ENCODE measurements at regions of chr12 and their contacts with region 1.

Region 1: GRCh38 chr12:85872497-85873091 is 1.5 kb upstream of the NTS start:
- DNase-seq: no peak
- ATAC-seq: no peak
- H3K4me3 ChIP-seq: no peak overlapping the region
- H3K27ac ChIP-seq: no peak overlapping the region
- H3K4me1 ChIP-seq: no peaks in the 10 kb centered on the region
- H3K27me3 ChIP-seq: no peaks in the 10 kb centered on the region

Region 2: DNA sequence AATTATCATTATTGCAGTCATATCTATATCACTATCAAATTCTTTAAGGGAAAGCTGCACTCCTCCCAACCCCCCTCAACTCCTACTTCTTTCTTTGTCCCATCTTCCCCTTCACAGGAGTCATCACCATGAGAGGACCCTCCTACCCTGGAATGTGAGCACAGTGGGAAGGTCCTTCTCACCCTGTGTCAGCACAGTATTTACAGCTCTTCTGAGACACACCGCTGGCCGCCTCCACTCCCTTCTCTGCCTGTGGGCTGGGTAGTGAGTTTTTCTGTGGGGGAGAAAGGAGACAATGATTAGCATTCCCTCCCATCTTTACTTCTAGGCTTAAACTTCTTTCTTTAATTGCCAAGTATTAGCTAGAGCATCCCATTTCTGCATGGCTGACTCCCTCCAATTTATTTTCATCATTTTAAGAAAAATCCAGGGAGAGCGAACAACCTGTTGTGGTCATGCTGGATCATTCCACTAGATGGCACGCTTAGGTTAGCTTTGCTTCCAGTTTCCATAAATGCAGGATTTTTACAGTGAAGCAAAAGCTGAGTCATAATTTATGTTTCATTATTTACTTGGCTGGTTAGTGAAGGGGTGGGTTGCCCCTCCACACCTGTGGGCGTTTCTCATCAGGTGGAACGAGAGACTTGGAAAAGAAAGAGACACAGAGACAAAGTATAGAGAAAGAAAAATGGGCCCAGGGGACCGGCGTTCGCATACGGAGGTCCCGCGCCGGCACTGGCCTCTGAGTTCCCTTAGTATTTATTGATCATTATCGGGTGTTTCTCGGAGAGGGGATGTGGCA is 404.0 kb before region 1 on chr12:
- intact Hi-C with region 1: loop called (anchors 5 kb)
- DNase-seq: no peak
- ATAC-seq: peak; percentile 76
- H3K4me3 ChIP-seq: peak overlapping the region; percentile 10 to 41
- H3K27ac ChIP-seq: no peak overlapping the region
- H3K4me1 ChIP-seq: no peaks in the 10 kb centered on the region
- H3K27me3 ChIP-seq: no peaks in the 10 kb centered on the region

Region 3: GRCh38 chr12:85476756-85477155 is 395.8 kb before region 1 on chr12:
- intact Hi-C with region 1: loop called (anchors 5 kb)
- DNase-seq: no peak
- ATAC-seq: no peak
- H3K4me3 ChIP-seq: no peak overlapping the region
- H3K27ac ChIP-seq: no peak overlapping the region
- H3K4me1 ChIP-seq: no peaks in the 10 kb centered on the region
- H3K27me3 ChIP-seq: no peaks in the 10 kb centered on the region

Region 4: GRCh38 chr12:85575120-85576096 is 297.2 kb before region 1 on chr12:
- intact Hi-C with region 1: loop called (anchors 2 kb)
- DNase-seq: peak in 1 of 2 donors; percentile 39
- ATAC-seq: peak; percentile 74
- H3K4me3 ChIP-seq: no peak overlapping the region
- H3K27ac ChIP-seq: no peak overlapping the region
- H3K4me1 ChIP-seq: no peaks in the 10 kb centered on the region
- H3K27me3 ChIP-seq: no peaks in the 10 kb centered on the region

Region 5: DNA sequence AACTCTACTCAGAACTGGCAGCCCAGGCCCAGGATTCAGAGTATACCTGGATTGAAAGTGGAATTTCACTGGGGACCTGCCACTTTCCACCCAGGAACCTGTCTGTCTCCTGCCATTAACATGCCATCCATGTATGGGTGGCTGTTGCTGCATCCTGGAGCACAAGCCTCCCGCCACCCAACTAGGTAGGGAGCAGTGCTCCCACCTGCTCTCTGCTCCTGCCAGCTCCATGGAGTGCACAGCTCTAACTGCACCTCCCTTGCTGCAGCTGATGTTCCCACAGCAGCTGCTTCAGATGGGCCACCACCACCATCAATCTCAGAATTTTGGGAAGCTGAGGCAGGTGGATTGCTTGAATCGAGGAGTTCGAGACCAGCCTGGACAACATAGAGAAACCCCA is 15.6 kb before region 1 on chr12:
- intact Hi-C with region 1: no loop called
- DNase-seq: no peak
- ATAC-seq: no peak
- H3K4me3 ChIP-seq: no peak overlapping the region
- H3K27ac ChIP-seq: no peak overlapping the region
- H3K4me1 ChIP-seq: no peaks in the 10 kb centered on the region
- H3K27me3 ChIP-seq: no peaks in the 10 kb centered on the region

Region 6: DNA sequence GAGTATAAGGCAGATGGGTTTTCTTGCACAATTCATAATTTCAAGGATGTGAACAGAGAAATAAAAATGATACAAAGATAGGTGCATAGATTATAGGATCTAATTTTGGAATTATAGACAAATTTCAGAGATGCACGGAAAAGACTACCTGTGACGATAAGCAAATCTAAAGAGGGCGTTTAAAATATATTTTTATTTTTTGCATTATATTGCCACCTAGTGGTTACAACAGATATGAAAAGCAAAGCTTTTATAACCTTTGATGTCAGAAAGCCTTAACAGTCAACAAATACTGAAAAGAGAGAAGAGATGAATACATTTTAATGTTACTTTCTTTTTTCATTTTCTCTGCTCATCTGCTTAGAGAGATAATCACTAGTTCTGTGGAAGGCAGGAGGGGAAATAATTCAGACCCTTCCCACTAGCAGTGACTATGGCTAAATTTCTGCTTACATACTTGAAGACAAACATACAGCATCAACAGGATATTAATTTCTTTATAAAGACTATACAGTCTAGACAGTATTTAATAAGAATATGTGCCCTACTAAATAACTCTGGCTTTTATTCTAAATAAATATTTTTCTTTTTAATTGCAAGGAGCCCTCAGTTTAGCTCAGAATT is 47.8 kb after region 1 on chr12:
- intact Hi-C with region 1: no loop called
- DNase-seq: no peak
- ATAC-seq: no peak
- H3K4me3 ChIP-seq: no peak overlapping the region
- H3K27ac ChIP-seq: no peak overlapping the region
- H3K4me1 ChIP-seq: no peaks in the 10 kb centered on the region
- H3K27me3 ChIP-seq: no peaks in the 10 kb centered on the region

Measured in aorta (tissue), 5 donors.